ENCODE measurements at regions of chr4 and their contacts with region 1.

Region 1: DNA sequence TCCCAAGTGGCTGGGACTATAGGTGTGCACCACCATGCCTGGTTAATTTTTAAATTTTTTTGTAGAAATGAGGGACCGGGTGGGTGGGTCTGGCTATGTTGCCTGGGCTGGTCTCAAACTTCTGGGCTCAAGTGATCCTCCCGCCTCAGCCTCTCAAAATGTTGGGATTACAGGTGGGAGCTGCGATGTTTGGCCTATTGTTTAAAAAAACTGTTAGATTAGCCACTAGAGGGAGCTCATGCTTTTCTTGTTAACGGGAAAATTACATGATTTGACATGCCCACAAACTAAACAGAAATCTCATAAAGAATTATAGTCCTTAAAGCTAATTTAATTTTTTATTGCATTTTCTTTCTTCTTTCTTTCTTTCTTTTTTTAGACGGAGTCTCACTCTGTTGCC is 5.0 kb upstream of the SDAD1 start:
- DNase-seq: no peak
- ATAC-seq: peak; percentile 52
- H3K4me3 ChIP-seq: no peak overlapping the region
- H3K27ac ChIP-seq: no peak overlapping the region
- H3K4me1 ChIP-seq: no peaks in the 10 kb centered on the region
- H3K27me3 ChIP-seq: no peaks in the 10 kb centered on the region; a peak in 1 of 4 replicates
- CTCF ChIP-seq: peak; percentile 46 to 62 (median 53); a peak in 5 of 6 replicates
- EP300 ChIP-seq: no peak
- POLR2A ChIP-seq: no peak
- RAD21 ChIP-seq: peak; percentile 80

Region 2: GRCh38 chr4:75779105-75779757 is 216.5 kb before region 1 on chr4:
- CTCF ChIA-PET with region 1: no interaction called
- POLR2A ChIA-PET with region 1: no interaction called
- RAD21 ChIA-PET with region 1: no interaction called
- SMC1A ChIA-PET with region 1: no interaction called
- in situ Hi-C with region 1: no loop called
- intact Hi-C with region 1: no loop called
- DNase-seq: no peak
- ATAC-seq: peak; percentile 74
- H3K4me3 ChIP-seq: no peak overlapping the region
- H3K27ac ChIP-seq: no peak overlapping the region
- H3K4me1 ChIP-seq: no peaks in the 10 kb centered on the region; the same call in 1 of the 2 replicates
- H3K27me3 ChIP-seq: no peaks in the 10 kb centered on the region
- CTCF ChIP-seq: no peak
- EP300 ChIP-seq: no peak
- POLR2A ChIP-seq: no peak
- RAD21 ChIP-seq: no peak

Region 3: DNA sequence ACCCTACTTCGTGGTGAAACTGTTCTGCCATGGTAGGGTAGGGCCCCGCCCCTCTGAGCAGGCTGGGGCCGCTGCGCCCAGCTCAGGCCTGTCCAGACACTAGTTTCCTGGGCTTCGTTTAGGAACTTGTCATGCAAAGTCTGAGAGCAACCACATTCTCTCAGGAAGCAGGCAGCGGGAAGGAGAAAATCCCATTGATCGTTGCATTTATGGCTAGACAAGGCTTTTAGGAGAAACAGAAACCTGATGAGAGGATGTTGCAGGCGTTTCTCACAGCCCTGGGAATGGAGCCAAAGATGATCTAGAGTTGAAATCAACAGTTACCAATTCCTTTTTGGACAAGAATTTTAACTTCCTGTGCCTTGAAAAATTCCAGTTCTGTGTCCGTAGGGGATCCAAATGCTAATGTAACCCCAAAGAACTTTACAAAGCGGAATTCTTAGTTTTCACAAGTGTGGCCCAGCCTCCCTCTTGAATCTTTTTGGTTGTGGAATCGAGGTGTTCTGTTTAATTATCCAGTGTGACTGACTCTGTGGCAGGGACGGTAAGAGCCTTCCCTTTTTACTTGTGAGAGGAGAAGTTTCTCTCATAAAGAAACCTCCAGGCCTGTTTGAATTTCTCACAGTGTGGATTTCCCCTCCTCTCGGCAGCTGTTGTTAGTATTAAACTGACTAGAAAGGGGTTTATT is 16.1 kb after region 1 on chr4:
- CTCF ChIA-PET with region 1: interaction called, 18 read pairs
- POLR2A ChIA-PET with region 1: no interaction called
- RAD21 ChIA-PET with region 1: interaction called, 4 read pairs
- SMC1A ChIA-PET with region 1: interaction called, 11 read pairs
- in situ Hi-C with region 1: no loop called
- intact Hi-C with region 1: no loop called
- DNase-seq: peak; percentile 60
- ATAC-seq: peak; percentile 88
- H3K4me3 ChIP-seq: peak overlapping the region; percentile 32; the same call in 1 of the 2 replicates
- H3K27ac ChIP-seq: peak overlapping the region; percentile 85
- H3K4me1 ChIP-seq: peaks cover 49% of the 10 kb centered on the region
- H3K27me3 ChIP-seq: no peaks in the 10 kb centered on the region; a peak in 1 of 4 replicates
- CTCF ChIP-seq: no peak
- EP300 ChIP-seq: peak in 1 of 2 experiments; percentile 22; a peak in 1 of 4 replicates
- POLR2A ChIP-seq: no peak
- RAD21 ChIP-seq: no peak

Region 4: DNA sequence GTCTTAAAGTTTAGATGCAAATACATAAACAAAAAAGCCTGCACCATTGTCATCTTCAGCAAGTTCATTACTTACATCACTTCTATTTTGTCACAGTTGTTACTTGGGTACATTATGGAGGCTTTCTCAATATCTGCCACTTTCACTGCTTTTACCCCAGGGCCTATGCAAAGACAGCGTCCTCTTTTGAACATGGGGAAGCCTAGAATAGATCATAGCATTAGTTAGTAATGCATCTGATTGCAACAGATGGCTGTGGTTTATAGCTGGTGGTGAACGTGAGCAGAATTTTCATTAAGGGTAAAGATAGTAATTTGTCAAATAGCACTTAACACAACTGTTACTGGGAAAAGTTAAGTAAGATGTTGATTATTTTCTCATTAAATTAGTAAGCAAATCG is 39.4 kb after region 1 on chr4:
- CTCF ChIA-PET with region 1: interaction called, 20 read pairs
- POLR2A ChIA-PET with region 1: no interaction called
- RAD21 ChIA-PET with region 1: interaction called, 6 read pairs
- SMC1A ChIA-PET with region 1: interaction called, 13 read pairs
- in situ Hi-C with region 1: no loop called
- intact Hi-C with region 1: no loop called
- DNase-seq: no peak
- ATAC-seq: peak; percentile 50
- H3K4me3 ChIP-seq: no peak overlapping the region
- H3K27ac ChIP-seq: no peak overlapping the region
- H3K4me1 ChIP-seq: no peaks in the 10 kb centered on the region
- H3K27me3 ChIP-seq: no peaks in the 10 kb centered on the region; a peak in 1 of 4 replicates
- CTCF ChIP-seq: no peak
- EP300 ChIP-seq: no peak
- POLR2A ChIP-seq: no peak
- RAD21 ChIP-seq: no peak

Region 5: DNA sequence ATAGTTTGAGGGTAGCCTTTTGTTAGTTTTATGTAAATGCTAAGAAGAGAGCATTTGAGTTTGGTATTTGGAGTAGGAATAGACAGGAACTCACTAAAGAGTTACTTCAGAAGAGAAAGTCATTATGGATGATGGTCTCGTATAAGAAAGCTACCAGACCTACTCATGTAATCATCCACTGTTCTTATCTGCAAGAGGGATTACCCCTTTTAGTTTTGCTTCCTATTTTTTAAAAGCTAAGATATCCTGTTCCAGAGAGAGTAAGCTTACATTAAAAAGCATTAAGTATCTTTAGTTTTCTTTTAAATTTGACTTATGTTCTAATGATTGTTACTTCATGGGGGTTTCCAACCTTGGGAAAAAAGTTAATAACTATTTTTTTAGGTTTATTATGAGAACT is 66.3 kb after region 1 on chr4:
- CTCF ChIA-PET with region 1: interaction called, 95 read pairs
- POLR2A ChIA-PET with region 1: interaction called, 3 read pairs
- RAD21 ChIA-PET with region 1: interaction called, 28 read pairs
- SMC1A ChIA-PET with region 1: interaction called, 95 read pairs
- in situ Hi-C with region 1: loop called (anchors 5 kb)
- intact Hi-C with region 1: loop called (anchors 1 kb)
- DNase-seq: no peak
- ATAC-seq: peak; percentile 78
- H3K4me3 ChIP-seq: no peak overlapping the region
- H3K27ac ChIP-seq: no peak overlapping the region
- H3K4me1 ChIP-seq: peaks cover 11% of the 10 kb centered on the region; the same call in 1 of the 2 replicates
- H3K27me3 ChIP-seq: peaks cover 0 to 3% of the 10 kb centered on the region in 2 experiments; a peak in 3 of 4 replicates
- CTCF ChIP-seq: no peak
- EP300 ChIP-seq: no peak
- POLR2A ChIP-seq: no peak
- RAD21 ChIP-seq: no peak

Region 6: GRCh38 chr4:76087007-76087769 is 91.5 kb after region 1 on chr4:
- CTCF ChIA-PET with region 1: interaction called, 43 read pairs
- POLR2A ChIA-PET with region 1: no interaction called
- RAD21 ChIA-PET with region 1: interaction called, 8 read pairs
- SMC1A ChIA-PET with region 1: interaction called, 25 read pairs
- in situ Hi-C with region 1: no loop called
- intact Hi-C with region 1: no loop called
- DNase-seq: no peak
- ATAC-seq: peak; percentile 70
- H3K4me3 ChIP-seq: no peak overlapping the region
- H3K27ac ChIP-seq: no peak overlapping the region
- H3K4me1 ChIP-seq: no peaks in the 10 kb centered on the region
- H3K27me3 ChIP-seq: peaks cover 0 to 3% of the 10 kb centered on the region in 2 experiments; a peak in 1 of 4 replicates
- CTCF ChIP-seq: peak; percentile 27 to 45 (median 34); a peak in 4 of 6 replicates
- EP300 ChIP-seq: no peak
- POLR2A ChIP-seq: no peak
- RAD21 ChIP-seq: peak; percentile 46